ENCODE measurements at regions of chr18 and their contacts with region 1.

Region 1: DNA sequence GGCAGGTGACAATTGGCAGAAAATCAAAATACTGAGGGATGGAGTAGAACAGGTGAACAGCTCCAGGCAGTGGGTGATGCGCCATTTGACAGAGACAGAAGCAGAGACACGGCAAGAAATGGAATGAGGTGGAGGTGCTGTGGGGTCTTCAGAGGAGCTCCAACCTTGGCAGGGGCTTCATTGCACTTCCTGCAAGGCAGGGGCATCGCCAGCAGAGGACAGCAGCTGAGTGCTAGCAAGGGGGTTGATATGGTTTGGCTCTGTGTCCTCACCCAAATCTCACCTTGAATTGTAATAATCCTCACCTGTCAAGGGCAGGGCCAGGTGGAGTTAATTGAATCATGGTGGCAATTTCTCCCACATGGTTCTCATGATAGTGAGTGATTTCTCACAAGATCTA is 42.8 kb downstream of the CCDC68 start:
- DNase-seq: no peak
- H3K4me3 Mint-ChIP-seq: no peak overlapping the region
- H3K27ac Mint-ChIP-seq: no peak overlapping the region
- H3K4me1 Mint-ChIP-seq: no peaks in the 10 kb centered on the region
- H3K27me3 Mint-ChIP-seq: no peaks in the 10 kb centered on the region

Region 2: GRCh38 chr18:54734059-54734458 is 182.4 kb before region 1 on chr18:
- CTCF ChIA-PET with region 1: no interaction called
- intact Hi-C with region 1: no loop called
- DNase-seq: no peak
- H3K4me3 Mint-ChIP-seq: no peak overlapping the region
- H3K27ac Mint-ChIP-seq: no peak overlapping the region
- H3K4me1 Mint-ChIP-seq: peaks cover 7% of the 10 kb centered on the region
- H3K27me3 Mint-ChIP-seq: peaks cover 4% of the 10 kb centered on the region

Region 3: GRCh38 chr18:54900290-54900689 is 16.2 kb before region 1 on chr18:
- CTCF ChIA-PET with region 1: no interaction called
- intact Hi-C with region 1: no loop called
- DNase-seq: no peak
- H3K4me3 Mint-ChIP-seq: no peak overlapping the region
- H3K27ac Mint-ChIP-seq: no peak overlapping the region
- H3K4me1 Mint-ChIP-seq: no peaks in the 10 kb centered on the region
- H3K27me3 Mint-ChIP-seq: no peaks in the 10 kb centered on the region

Region 4: GRCh38 chr18:54983041-54983686 is 66.7 kb after region 1 on chr18:
- CTCF ChIA-PET with region 1: no interaction called
- intact Hi-C with region 1: loop called (anchors 5 kb)
- DNase-seq: no peak
- H3K4me3 Mint-ChIP-seq: no peak overlapping the region
- H3K27ac Mint-ChIP-seq: no peak overlapping the region
- H3K4me1 Mint-ChIP-seq: no peaks in the 10 kb centered on the region
- H3K27me3 Mint-ChIP-seq: no peaks in the 10 kb centered on the region

Region 5: GRCh38 chr18:55199291-55199963 is 282.9 kb after region 1 on chr18:
- CTCF ChIA-PET with region 1: no interaction called
- intact Hi-C with region 1: no loop called
- DNase-seq: no peak
- H3K4me3 Mint-ChIP-seq: no peak overlapping the region
- H3K27ac Mint-ChIP-seq: no peak overlapping the region
- H3K4me1 Mint-ChIP-seq: no peaks in the 10 kb centered on the region
- H3K27me3 Mint-ChIP-seq: peaks cover 3% of the 10 kb centered on the region